IMR-90 (cell line): ENCODE measurements at regions of chr5 and their contacts with region 1.

Region 1: GRCh38 chr5:61331407-61332357 is at the start of gene ZSWIM6:
- DNase-seq: peak; percentile 99
- ATAC-seq: peak; percentile 80
- H3K4me3 ChIP-seq: peak within 1 kb of the TSS; percentile 96
- H3K27ac ChIP-seq: peak within 1 kb of the TSS; percentile 92
- H3K4me1 ChIP-seq: peaks cover 20% of the 10 kb centered on the region
- H3K27me3 ChIP-seq: no peaks in the 10 kb centered on the region
- CTCF ChIP-seq: 0 out of 2 replicates have a peak, but pooled peaks have one; percentile 1
- POLR2A ChIP-seq: peak; percentile 98
- RAD21 ChIP-seq: no peak
- total RNA-seq, gene ZSWIM6: 10.8 TPM in 2 replicates

Region 2: DNA sequence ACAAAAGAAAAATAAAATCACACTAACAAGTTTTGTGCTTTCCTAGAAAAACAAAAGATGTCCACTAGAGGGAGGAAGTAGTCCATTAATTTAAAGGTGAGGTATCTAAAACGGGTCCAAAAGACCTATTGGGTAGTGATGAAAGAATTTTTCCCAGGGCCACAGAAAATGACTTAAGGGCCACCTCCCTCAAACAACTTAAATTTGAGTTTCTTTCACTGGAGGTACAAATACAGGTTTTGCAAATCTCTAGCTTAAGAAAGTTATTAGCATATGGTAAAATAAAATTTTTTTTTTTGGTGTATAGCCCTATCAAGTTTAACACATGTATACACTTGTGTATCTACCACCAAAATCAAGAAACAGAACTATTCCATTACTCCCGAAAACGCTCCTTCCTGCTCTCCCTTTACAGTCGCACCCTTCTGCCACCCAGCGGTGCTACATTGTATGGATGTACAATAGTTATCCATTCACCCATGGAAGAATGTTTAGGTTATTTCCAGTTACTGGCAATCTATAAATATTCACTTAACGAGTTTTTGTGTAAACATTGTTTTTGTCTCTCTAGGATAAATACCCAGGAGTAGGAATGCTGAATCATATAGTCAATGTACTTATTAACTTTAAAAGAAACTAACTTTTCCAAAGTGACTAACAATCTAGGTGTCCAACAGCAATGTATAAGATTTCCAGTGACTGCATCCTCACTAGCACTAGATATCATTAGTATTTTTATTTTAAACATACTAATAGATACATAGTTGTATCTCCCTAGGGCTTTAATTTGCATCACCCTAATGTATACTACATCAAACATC is 653.6 kb before region 1 on chr5:
- CTCF ChIA-PET with region 1: no interaction called
- POLR2A ChIA-PET with region 1: no interaction called
- dilution Hi-C with region 1: no loop called
- in situ Hi-C with region 1: no loop called
- intact Hi-C with region 1: loop called (anchors 10 kb)
- DNase-seq: peak; percentile 58
- ATAC-seq: peak; percentile 68
- H3K4me3 ChIP-seq: no peak overlapping the region
- H3K27ac ChIP-seq: peak overlapping the region; percentile 29; the same call in 1 of the 2 replicates
- H3K4me1 ChIP-seq: peaks cover 6% of the 10 kb centered on the region; the same call in 1 of the 2 replicates
- H3K27me3 ChIP-seq: no peaks in the 10 kb centered on the region
- CTCF ChIP-seq: peak; percentile 63
- POLR2A ChIP-seq: no peak
- RAD21 ChIP-seq: peak; percentile 52

Region 3: GRCh38 chr5:61100437-61100836 is 231.2 kb before region 1 on chr5:
- CTCF ChIA-PET with region 1: no interaction called
- POLR2A ChIA-PET with region 1: no interaction called
- dilution Hi-C with region 1: no loop called
- in situ Hi-C with region 1: no loop called
- intact Hi-C with region 1: no loop called
- DNase-seq: no peak
- ATAC-seq: no peak
- H3K4me3 ChIP-seq: no peak overlapping the region
- H3K27ac ChIP-seq: no peak overlapping the region
- H3K4me1 ChIP-seq: no peaks in the 10 kb centered on the region
- H3K27me3 ChIP-seq: no peaks in the 10 kb centered on the region
- CTCF ChIP-seq: no peak
- POLR2A ChIP-seq: no peak
- RAD21 ChIP-seq: no peak

Region 4: GRCh38 chr5:61162010-61162831 is 169.5 kb before region 1 on chr5 and contains the start of gene SMIM15:
- CTCF ChIA-PET with region 1: interaction called, 3 read pairs
- POLR2A ChIA-PET with region 1: no interaction called
- dilution Hi-C with region 1: no loop called
- in situ Hi-C with region 1: loop called (anchors 5 kb)
- intact Hi-C with region 1: loop called (anchors 1 kb)
- DNase-seq: peak; percentile 87
- ATAC-seq: peak; percentile 95
- H3K4me3 ChIP-seq: peak within 1 kb of the TSS; percentile 94
- H3K27ac ChIP-seq: peak within 1 kb of the TSS; percentile 95
- H3K4me1 ChIP-seq: peaks cover 5% of the 10 kb centered on the region
- H3K27me3 ChIP-seq: no peaks in the 10 kb centered on the region
- CTCF ChIP-seq: no peak
- POLR2A ChIP-seq: peak; percentile 70
- RAD21 ChIP-seq: 0 out of 2 replicates have a peak, but pooled peaks have one; percentile 3
- total RNA-seq, gene SMIM15: 94.3 and 101 TPM in 2 replicates

Region 5: GRCh38 chr5:61277190-61277589 is 54.5 kb before region 1 on chr5:
- CTCF ChIA-PET with region 1: interaction called, 7 read pairs
- POLR2A ChIA-PET with region 1: interaction called, 7 read pairs
- dilution Hi-C with region 1: no loop called
- in situ Hi-C with region 1: no loop called
- intact Hi-C with region 1: loop called (anchors 2 kb)
- DNase-seq: peak; percentile 64
- ATAC-seq: peak; percentile 56
- H3K4me3 ChIP-seq: no peak overlapping the region
- H3K27ac ChIP-seq: peak overlapping the region; percentile 78; the same call in 1 of the 2 replicates
- H3K4me1 ChIP-seq: peaks cover 32% of the 10 kb centered on the region
- H3K27me3 ChIP-seq: no peaks in the 10 kb centered on the region
- CTCF ChIP-seq: peak; percentile 54
- POLR2A ChIP-seq: no peak
- RAD21 ChIP-seq: peak; percentile 64

Region 6: GRCh38 chr5:61467766-61468482 is 136.2 kb after region 1 on chr5:
- CTCF ChIA-PET with region 1: no interaction called
- POLR2A ChIA-PET with region 1: no interaction called
- dilution Hi-C with region 1: no loop called
- in situ Hi-C with region 1: no loop called
- intact Hi-C with region 1: loop called (anchors 10 kb)
- DNase-seq: peak; percentile 66
- ATAC-seq: peak; percentile 63
- H3K4me3 ChIP-seq: no peak overlapping the region
- H3K27ac ChIP-seq: no peak overlapping the region
- H3K4me1 ChIP-seq: peaks cover 12% of the 10 kb centered on the region
- H3K27me3 ChIP-seq: no peaks in the 10 kb centered on the region
- CTCF ChIP-seq: no peak
- POLR2A ChIP-seq: no peak
- RAD21 ChIP-seq: no peak

Region 7: GRCh38 chr5:61687371-61687770 is 355.7 kb after region 1 on chr5:
- CTCF ChIA-PET with region 1: no interaction called
- POLR2A ChIA-PET with region 1: no interaction called
- dilution Hi-C with region 1: no loop called
- in situ Hi-C with region 1: no loop called
- intact Hi-C with region 1: no loop called
- DNase-seq: no peak
- ATAC-seq: peak; percentile 14; the same call in 1 of the 2 replicates
- H3K4me3 ChIP-seq: no peak overlapping the region
- H3K27ac ChIP-seq: no peak overlapping the region
- H3K4me1 ChIP-seq: no peaks in the 10 kb centered on the region
- H3K27me3 ChIP-seq: peaks cover 5% of the 10 kb centered on the region
- CTCF ChIP-seq: no peak
- POLR2A ChIP-seq: no peak
- RAD21 ChIP-seq: no peak

Region 8: GRCh38 chr5:61817472-61818326 is 486.0 kb after region 1 on chr5:
- CTCF ChIA-PET with region 1: interaction called, 3 read pairs
- POLR2A ChIA-PET with region 1: no interaction called
- dilution Hi-C with region 1: no loop called
- in situ Hi-C with region 1: loop called (anchors 25 kb)
- intact Hi-C with region 1: loop called (anchors 1 kb)
- DNase-seq: peak; percentile 39
- ATAC-seq: peak; percentile 94
- H3K4me3 ChIP-seq: no peak overlapping the region
- H3K27ac ChIP-seq: no peak overlapping the region
- H3K4me1 ChIP-seq: no peaks in the 10 kb centered on the region
- H3K27me3 ChIP-seq: peaks cover 2% of the 10 kb centered on the region
- CTCF ChIP-seq: peak; percentile 57
- POLR2A ChIP-seq: no peak
- RAD21 ChIP-seq: peak; percentile 52